ENCODE measurements at regions of chr1 and their contacts with region 1.

Region 1: DNA sequence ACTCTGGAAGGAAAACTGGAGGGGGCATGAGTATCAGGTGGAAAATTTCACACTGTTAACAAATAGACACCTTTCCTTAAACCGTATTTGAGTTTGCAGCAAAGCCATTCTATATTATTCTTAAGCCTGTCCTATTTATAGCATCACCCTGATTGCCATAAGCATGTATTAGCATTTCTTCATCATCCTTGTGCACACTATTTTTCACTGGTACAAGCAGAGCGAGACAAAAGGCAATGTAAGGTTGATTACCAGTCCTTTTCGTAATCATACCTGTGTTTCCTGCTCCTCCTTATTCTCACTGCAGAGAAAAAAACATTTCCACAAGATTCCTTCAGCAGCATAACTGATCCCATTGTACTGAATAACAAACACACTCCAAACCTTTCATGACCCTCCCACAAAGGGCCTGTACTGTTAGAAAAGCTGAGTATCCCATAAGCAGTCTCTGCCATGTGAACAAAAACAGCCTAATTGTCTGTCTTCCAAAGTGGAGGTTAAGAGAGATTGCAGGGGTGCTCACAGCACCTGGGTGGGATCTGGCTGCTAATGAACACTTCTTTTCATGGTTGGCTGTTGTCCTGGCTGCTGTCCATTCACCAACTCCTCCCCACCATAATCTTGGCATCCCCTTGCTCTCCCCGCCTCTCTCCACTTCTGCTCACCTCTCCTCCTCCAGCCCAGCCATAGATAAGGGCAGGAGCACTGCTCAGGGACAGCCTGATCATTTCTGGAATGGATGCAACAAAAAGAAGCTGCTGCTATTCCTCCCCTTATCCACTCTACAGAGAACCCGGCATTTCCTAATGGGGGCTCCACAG is 30.4 kb downstream of the VTCN1 start:
- DNase-seq: no peak
- H3K4me3 ChIP-seq: no peak overlapping the region
- H3K27ac ChIP-seq: no peak overlapping the region
- H3K4me1 ChIP-seq: no peaks in the 10 kb centered on the region
- H3K27me3 ChIP-seq: no peaks in the 10 kb centered on the region
- CTCF ChIP-seq: no peak
- EP300 ChIP-seq: no peak
- POLR2A ChIP-seq: no peak

Region 2: DNA sequence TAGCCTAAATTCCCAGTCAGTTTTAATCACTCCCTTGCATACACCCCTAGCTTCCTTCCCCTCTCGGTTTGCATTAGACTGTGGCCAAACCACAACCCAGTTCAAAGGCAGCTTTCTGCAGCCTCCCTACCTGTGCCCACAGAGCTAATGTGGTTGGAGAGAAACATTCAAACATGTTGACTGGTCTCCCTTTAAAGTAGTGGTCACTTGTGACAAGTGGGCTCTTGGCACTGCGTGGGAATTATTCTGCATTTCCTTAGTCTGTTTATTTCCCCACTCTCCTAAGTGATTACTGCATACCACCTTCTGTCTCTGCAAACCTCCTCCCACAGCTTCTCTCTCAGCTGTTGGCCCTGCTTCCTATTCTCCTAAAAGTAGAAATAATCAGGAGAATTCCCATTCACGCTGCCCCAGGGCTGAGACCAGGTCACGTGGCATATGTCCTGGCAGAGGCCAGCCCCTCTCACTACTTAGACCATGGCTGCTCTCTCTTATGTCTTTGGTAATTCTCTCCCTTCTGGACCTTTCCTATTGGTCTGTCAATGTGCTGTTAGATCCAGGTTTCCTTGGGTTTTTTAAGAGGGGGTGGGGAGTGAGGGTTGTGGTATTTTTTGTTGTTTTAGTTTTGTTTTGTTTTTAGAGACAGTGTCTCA is 217.2 kb before region 1 on chr1:
- in situ Hi-C with region 1: no loop called
- intact Hi-C with region 1: no loop called
- DNase-seq: no peak
- H3K4me3 ChIP-seq: no peak overlapping the region
- H3K27ac ChIP-seq: no peak overlapping the region
- H3K4me1 ChIP-seq: peaks cover 0 to 3% (median 0%) of the 10 kb centered on the region in 4 donors
- H3K27me3 ChIP-seq: no peaks in the 10 kb centered on the region
- CTCF ChIP-seq: no peak
- EP300 ChIP-seq: no peak
- POLR2A ChIP-seq: no peak

Region 3: DNA sequence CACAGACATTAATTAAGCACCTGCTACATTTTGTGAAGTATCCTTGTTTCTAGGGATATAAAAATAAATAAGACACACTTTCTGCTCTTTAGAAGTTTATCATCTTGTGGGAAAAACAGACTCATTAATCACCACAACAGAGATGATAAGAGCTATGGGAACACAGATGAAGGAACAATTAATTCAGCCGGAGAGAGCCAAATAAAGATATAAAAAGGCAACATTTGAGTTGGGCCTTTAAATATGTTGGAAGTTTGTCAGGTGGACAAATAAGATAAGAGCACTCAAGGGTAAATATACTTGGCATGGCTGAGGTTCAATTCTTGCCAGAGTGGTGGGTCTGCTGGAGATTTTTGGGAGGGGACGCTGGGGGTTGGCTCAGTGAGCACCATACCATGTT is 64.6 kb after region 1 on chr1:
- in situ Hi-C with region 1: loop called in 1 of 4 experiments (anchors 10 kb)
- intact Hi-C with region 1: no loop called
- DNase-seq: no peak
- H3K4me3 ChIP-seq: no peak overlapping the region
- H3K27ac ChIP-seq: no peak overlapping the region
- H3K4me1 ChIP-seq: no peaks in the 10 kb centered on the region
- H3K27me3 ChIP-seq: peaks cover 7% of the 10 kb centered on the region
- CTCF ChIP-seq: no peak
- EP300 ChIP-seq: no peak
- POLR2A ChIP-seq: no peak

Measured in transverse colon (tissue), 4 donors.